Activated T-helper 1 cell treated with anti-CD3 and anti-CD28 coated beads, Interleukin-12 subunit alpha, Interleukin-12 subunit beta, Interleukin-2, Interleukin-4 antibody, amounts not matched to agents 30 ng/mL and 10 ng/mL and 1 ng/mL, durations not matched to agents 14 hours and 24 hours and 36 hours (primary cell): ENCODE measurements at regions of chr7 and their contacts with region 1.

Region 1: DNA sequence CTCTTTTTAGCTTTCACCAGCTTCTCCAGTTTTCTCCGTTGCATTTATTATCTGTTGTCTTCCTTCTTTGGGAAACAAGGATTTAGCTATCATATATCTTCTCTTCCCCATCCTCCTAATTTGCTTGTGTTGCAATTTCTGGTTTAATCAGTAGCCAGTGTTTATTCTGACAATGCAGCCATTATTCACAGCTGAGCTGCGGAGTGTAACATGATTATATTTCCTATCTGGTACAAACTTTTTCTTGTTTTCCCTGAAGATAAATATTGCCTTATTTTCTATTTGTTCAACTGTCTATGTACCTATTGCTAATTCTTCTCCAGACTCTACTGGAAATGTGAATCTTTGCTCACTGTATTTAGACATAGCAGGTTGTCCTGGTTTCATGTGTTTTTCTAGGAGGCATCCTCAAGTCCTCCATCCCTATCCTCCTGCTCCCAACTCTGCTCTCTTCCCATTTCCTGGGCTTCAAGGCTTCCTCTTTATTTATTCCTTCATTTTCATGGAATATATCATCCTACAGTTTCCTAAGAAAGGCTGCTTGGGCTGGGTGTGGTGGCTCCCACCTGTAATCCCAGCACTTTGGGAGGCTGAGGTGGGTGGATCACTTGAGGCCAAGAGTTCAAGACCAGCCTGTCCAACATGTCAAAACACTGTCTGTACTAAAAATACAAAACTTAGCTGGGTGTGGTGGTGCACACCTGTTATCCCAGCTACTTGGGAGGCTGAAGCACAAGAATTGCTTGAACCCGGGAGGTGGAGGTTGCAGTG is 72.4 kb upstream of the KDM7A start:
- DNase-seq: no peak
- H3K4me3 Mint-ChIP-seq: no peak overlapping the region
- H3K27ac Mint-ChIP-seq: no peak overlapping the region
- H3K4me1 Mint-ChIP-seq: peaks cover 30% of the 10 kb centered on the region
- H3K27me3 Mint-ChIP-seq: no peaks in the 10 kb centered on the region

Region 2: DNA sequence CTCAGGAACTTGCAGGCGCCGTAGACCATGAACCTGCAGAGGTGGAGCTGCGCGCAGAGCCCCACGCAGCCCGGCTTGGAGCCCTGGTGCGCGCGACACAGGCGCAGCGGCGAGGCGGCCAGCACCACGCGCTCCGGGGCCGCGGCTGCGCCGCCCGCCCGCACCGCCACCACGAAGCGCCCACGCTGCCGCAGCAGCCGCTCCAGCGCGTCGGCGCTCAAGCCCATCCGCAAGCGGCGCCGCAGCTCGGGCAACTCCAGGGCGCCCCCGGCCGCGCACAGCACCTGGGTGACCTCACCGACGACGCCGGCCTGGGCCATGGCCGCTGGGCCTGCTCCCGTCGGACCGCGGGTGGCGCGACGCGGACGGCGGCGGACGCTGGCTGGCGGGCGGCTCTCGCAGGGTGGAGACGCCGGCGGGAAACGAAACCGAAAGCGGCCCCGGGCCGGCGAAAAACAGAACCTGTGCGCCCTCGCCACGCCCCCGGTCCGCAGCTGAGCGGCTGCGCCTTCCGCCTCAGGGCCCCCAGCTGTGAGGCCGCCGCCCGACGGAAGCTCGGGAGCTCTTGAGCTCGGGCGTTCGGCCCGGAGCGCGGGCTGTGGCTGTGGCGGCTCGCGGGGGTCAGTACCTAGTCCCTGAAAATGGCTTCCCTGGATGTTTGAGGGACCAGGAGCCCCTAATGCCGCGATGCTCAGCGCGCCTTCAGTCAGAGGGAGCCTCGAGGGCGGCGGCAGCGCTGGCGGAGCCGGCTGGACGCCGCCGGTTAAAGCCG is 186.5 kb before region 1 on chr7 and contains the start of gene PARP12:
- intact Hi-C with region 1: loop called (anchors 5 kb)
- DNase-seq: peak; percentile 88
- H3K4me3 Mint-ChIP-seq: peak within 1 kb of the TSS; percentile 82
- H3K27ac Mint-ChIP-seq: peak within 1 kb of the TSS; percentile 91
- H3K4me1 Mint-ChIP-seq: peaks cover 43% of the 10 kb centered on the region
- H3K27me3 Mint-ChIP-seq: peaks cover 5% of the 10 kb centered on the region
- total RNA-seq, gene PARP12: 62.0 and 63.7 TPM in 2 replicates

Region 3: GRCh38 chr7:140209866-140210609 is 39.2 kb before region 1 on chr7:
- intact Hi-C with region 1: loop called (anchors 1 kb)
- DNase-seq: peak; percentile 64
- H3K4me3 Mint-ChIP-seq: peak overlapping the region; percentile 71
- H3K27ac Mint-ChIP-seq: peak overlapping the region; percentile 86
- H3K4me1 Mint-ChIP-seq: peaks cover 79% of the 10 kb centered on the region
- H3K27me3 Mint-ChIP-seq: no peaks in the 10 kb centered on the region

Region 4: GRCh38 chr7:140260352-140261104 is 11.3 kb after region 1 on chr7:
- intact Hi-C with region 1: loop called (anchors 1 kb)
- DNase-seq: no peak
- H3K4me3 Mint-ChIP-seq: no peak overlapping the region
- H3K27ac Mint-ChIP-seq: no peak overlapping the region
- H3K4me1 Mint-ChIP-seq: peaks cover 42% of the 10 kb centered on the region
- H3K27me3 Mint-ChIP-seq: no peaks in the 10 kb centered on the region

Region 5: DNA sequence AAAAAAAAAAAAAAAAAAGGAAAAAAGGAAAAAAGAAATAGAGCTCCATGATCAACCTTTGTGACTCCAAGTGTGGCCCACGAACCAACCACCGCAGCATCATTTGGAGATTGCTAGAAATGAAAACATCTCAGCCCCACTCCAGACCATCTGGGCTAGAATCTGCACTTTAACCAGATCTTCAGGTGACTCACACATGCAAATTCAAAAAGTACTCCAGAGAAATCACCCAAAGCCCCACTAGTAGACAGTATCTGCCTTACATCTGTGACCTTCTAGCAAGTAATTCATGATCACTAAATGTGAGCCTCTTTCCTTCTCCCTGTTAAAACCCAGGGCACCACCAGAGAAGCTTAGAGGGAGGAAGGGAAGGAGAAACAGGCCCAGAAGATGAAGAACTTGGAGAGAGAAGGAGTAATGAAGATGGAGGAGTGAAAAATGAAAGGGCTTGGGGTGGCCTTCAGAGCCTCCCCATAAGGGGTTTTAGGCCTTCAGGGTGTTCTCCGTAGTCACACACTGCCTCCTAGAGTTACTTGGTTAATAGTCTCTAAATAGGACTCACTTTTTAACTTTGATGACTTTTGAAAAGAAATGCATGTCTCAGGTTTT is 55.1 kb after region 1 on chr7:
- intact Hi-C with region 1: loop called (anchors 1 kb)
- DNase-seq: peak; percentile 27
- H3K4me3 Mint-ChIP-seq: no peak overlapping the region
- H3K27ac Mint-ChIP-seq: peak overlapping the region; percentile 78
- H3K4me1 Mint-ChIP-seq: peaks cover 21% of the 10 kb centered on the region
- H3K27me3 Mint-ChIP-seq: no peaks in the 10 kb centered on the region

Region 6: GRCh38 chr7:140316165-140316661 is 67.0 kb after region 1 on chr7:
- intact Hi-C with region 1: loop called (anchors 2 kb)
- DNase-seq: no peak
- H3K4me3 Mint-ChIP-seq: no peak overlapping the region
- H3K27ac Mint-ChIP-seq: peak overlapping the region; percentile 35
- H3K4me1 Mint-ChIP-seq: peaks cover 53% of the 10 kb centered on the region
- H3K27me3 Mint-ChIP-seq: no peaks in the 10 kb centered on the region

Region 7: GRCh38 chr7:140390466-140391190 is 141.4 kb after region 1 on chr7:
- intact Hi-C with region 1: loop called (anchors 2 kb)
- DNase-seq: no peak
- H3K4me3 Mint-ChIP-seq: no peak overlapping the region
- H3K27ac Mint-ChIP-seq: no peak overlapping the region
- H3K4me1 Mint-ChIP-seq: peaks cover 2% of the 10 kb centered on the region
- H3K27me3 Mint-ChIP-seq: no peaks in the 10 kb centered on the region